Testis (tissue), 5 donors: ENCODE measurements at regions of chr19 and their contacts with region 1.

Region 1: GRCh38 chr19:15177269-15178116 is 23.3 kb downstream of the NOTCH3 start:
- DNase-seq: peak; percentile 90
- H3K4me3 ChIP-seq: peak overlapping the region in 1 of 2 donors; percentile 40
- H3K27ac ChIP-seq: no peak overlapping the region
- H3K4me1 ChIP-seq: no peaks in the 10 kb centered on the region
- H3K27me3 ChIP-seq: no peaks in the 10 kb centered on the region
- CTCF ChIP-seq: peak; percentile 96 to 99 (median 98)
- POLR2A ChIP-seq: no peak

Region 2: DNA sequence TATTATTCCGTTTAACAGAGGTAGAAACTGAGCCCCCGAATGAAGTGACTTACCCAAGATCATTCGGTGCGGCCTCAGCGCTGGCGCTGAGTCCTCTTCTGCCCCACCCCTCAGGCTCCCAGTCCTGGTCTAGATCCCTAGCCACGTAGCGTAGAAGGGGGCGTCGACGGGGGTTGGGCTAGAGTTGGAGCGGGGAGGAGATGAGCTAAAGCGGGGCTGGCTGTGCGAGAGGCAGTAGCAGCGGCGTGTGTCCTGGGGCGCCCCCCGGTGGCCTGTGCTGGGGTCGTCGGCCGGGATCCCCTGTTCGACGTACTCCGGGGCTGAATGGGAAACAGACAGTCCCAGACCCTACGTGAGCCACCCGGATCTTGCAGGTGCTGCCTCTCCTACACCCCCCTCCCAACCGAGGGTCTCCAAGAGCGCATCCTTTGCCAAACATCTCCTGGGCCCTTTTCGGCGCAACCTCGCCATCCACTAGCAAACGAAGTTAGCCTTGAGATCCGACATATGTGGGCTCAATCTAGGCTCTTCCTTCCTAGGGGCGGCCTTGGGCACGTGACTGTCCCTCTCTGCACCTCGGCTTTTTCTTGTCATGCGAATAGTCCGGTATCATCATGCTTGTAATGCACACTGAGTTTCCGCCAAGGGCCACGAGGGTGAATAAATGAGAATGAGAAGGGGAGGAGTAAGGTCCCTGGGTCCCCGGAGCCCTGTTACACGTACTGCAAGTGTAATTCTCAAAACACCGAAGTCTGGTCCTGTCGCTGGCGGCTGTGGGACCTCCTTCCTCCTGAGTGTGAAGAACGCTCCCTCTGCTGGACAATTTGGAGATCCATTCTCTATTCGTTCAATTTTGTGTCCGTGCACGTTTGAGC is 378.5 kb after region 1 on chr19:
- intact Hi-C with region 1: loop called (anchors 5 kb)
- DNase-seq: peak; percentile 96
- H3K4me3 ChIP-seq: peak overlapping the region; percentile 36 to 37
- H3K27ac ChIP-seq: no peak overlapping the region
- H3K4me1 ChIP-seq: peaks cover 12% of the 10 kb centered on the region
- H3K27me3 ChIP-seq: no peaks in the 10 kb centered on the region
- CTCF ChIP-seq: peak; percentile 20 to 89 (median 57)
- POLR2A ChIP-seq: no peak